Activated CD4-positive, alpha-beta T cell treated with anti-CD3 and anti-CD28 coated beads for 36 hours (primary cell): ENCODE measurements at regions of chr6 and their contacts with region 1.

Region 1: GRCh38 chr6:45486736-45487135 is 109.0 kb upstream of the SUPT3H start:
- DNase-seq: peak; percentile 50
- ATAC-seq: peak; percentile 94
- H3K4me3 Mint-ChIP-seq: no peak overlapping the region
- H3K27ac Mint-ChIP-seq: peak overlapping the region; percentile 58
- H3K4me1 Mint-ChIP-seq: peaks cover 53% of the 10 kb centered on the region
- H3K27me3 Mint-ChIP-seq: peaks cover 2% of the 10 kb centered on the region

Region 2: GRCh38 chr6:45436544-45437438 is 49.9 kb before region 1 on chr6:
- CTCF ChIA-PET with region 1: no interaction called
- POLR2A ChIA-PET with region 1: no interaction called
- intact Hi-C with region 1: loop called (anchors 1 to 2 kb)
- DNase-seq: peak; percentile 69
- ATAC-seq: peak; percentile 92
- H3K4me3 Mint-ChIP-seq: peak overlapping the region; percentile 59
- H3K27ac Mint-ChIP-seq: peak overlapping the region; percentile 92
- H3K4me1 Mint-ChIP-seq: peaks cover 74% of the 10 kb centered on the region
- H3K27me3 Mint-ChIP-seq: peaks cover 2% of the 10 kb centered on the region

Region 3: DNA sequence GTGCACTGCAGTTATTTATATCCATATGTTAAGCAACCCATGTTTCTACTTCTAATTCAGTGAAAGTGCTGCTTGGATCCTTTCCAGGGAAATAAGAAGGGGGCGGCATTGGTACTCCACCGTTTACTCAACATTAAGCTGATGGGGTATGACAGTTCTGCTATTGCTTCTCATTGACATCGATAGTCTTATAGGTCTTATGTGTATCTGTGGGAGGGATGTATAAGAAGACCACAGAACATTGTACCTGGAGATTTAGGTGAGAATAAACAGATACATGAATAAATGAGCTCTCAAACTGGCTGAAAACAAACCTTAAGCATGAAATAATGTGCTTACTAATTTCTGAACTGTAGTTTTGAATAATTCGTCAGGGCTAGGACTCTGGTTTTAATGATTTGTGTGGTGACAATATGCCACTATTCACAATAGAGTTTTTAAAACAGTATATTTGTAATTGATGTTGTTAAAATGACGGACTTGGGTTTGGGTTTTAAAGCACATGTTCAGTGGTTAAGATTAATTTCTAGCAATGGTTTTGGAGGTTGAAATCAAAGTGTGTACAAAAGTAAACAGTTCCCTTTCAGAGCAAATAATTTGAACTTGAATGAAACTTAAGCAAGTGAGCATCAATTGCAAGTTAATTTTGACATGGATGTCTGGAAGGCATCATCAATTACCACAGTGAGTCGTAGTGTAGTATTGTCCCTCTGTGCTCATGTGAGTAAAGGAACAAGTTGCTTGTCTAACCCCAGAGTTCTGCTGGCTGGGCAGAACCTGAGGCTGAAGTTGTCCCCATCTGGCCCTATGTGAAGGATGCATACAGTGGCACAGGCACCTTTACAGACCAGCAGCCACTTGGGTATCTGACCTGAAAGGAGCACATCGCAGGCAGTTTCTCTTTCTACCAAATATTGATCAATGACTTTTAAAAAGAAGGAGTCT is 24.3 kb before region 1 on chr6:
- CTCF ChIA-PET with region 1: no interaction called
- POLR2A ChIA-PET with region 1: no interaction called
- intact Hi-C with region 1: no loop called
- DNase-seq: no peak
- ATAC-seq: peak; percentile 54
- H3K4me3 Mint-ChIP-seq: no peak overlapping the region
- H3K27ac Mint-ChIP-seq: peak overlapping the region; percentile 38
- H3K4me1 Mint-ChIP-seq: peaks cover 20% of the 10 kb centered on the region
- H3K27me3 Mint-ChIP-seq: no peaks in the 10 kb centered on the region

Region 4: DNA sequence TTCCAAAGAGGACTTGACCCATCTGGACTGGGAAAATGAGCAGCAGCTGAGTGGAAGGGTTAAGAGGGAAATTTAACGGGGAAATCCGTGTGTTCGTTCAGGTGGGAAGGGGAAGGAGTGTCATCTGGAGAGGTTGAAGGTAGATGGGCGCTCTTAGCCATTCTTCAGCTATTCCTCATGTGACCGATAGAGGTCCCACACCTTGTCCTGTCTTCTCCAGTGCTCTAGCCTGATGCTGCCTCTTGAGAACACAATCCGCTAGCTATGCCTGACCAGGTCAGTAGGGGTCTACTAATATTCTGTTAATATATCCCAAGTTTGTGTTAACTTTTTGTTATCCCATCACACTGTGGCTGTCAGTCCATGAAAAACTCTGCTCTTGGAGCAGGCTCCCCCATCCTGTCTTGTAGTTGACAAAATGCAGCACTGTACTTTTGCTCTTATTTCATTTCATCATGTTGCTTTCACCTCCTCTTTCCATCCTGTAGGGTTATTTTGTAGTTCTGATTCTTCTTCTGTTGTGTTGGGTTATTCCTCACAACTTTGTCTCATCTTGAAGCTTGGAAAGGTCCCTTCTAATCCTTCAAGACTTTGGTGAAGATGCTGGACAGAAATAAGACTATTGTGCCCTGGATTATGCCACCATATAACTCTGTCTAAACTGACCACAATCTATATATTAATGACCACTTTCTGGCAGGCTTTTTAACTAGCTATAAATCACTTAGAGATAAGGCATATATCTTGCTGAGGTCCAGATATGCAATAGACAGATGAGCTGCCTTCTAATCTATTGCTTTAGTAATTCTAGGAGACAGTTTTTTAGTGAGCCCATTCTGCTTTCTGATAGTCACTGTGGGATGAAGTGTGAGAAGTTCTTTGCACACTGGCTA is 14.4 kb after region 1 on chr6:
- CTCF ChIA-PET with region 1: no interaction called
- POLR2A ChIA-PET with region 1: no interaction called
- intact Hi-C with region 1: no loop called
- DNase-seq: no peak
- ATAC-seq: no peak
- H3K4me3 Mint-ChIP-seq: no peak overlapping the region
- H3K27ac Mint-ChIP-seq: no peak overlapping the region
- H3K4me1 Mint-ChIP-seq: peaks cover 26% of the 10 kb centered on the region
- H3K27me3 Mint-ChIP-seq: no peaks in the 10 kb centered on the region

Region 5: GRCh38 chr6:45514454-45515230 is 27.9 kb after region 1 on chr6:
- CTCF ChIA-PET with region 1: no interaction called
- POLR2A ChIA-PET with region 1: no interaction called
- intact Hi-C with region 1: no loop called
- DNase-seq: no peak
- ATAC-seq: no peak
- H3K4me3 Mint-ChIP-seq: no peak overlapping the region
- H3K27ac Mint-ChIP-seq: no peak overlapping the region
- H3K4me1 Mint-ChIP-seq: no peaks in the 10 kb centered on the region
- H3K27me3 Mint-ChIP-seq: no peaks in the 10 kb centered on the region

Region 6: GRCh38 chr6:45590225-45590624 is 103.5 kb after region 1 on chr6:
- CTCF ChIA-PET with region 1: no interaction called
- POLR2A ChIA-PET with region 1: no interaction called
- intact Hi-C with region 1: loop called in 1 of 2 experiments (anchors 5 kb)
- DNase-seq: no peak
- ATAC-seq: peak; percentile 40
- H3K4me3 Mint-ChIP-seq: no peak overlapping the region
- H3K27ac Mint-ChIP-seq: peak overlapping the region; percentile 80
- H3K4me1 Mint-ChIP-seq: peaks cover 81% of the 10 kb centered on the region
- H3K27me3 Mint-ChIP-seq: no peaks in the 10 kb centered on the region

Region 7: DNA sequence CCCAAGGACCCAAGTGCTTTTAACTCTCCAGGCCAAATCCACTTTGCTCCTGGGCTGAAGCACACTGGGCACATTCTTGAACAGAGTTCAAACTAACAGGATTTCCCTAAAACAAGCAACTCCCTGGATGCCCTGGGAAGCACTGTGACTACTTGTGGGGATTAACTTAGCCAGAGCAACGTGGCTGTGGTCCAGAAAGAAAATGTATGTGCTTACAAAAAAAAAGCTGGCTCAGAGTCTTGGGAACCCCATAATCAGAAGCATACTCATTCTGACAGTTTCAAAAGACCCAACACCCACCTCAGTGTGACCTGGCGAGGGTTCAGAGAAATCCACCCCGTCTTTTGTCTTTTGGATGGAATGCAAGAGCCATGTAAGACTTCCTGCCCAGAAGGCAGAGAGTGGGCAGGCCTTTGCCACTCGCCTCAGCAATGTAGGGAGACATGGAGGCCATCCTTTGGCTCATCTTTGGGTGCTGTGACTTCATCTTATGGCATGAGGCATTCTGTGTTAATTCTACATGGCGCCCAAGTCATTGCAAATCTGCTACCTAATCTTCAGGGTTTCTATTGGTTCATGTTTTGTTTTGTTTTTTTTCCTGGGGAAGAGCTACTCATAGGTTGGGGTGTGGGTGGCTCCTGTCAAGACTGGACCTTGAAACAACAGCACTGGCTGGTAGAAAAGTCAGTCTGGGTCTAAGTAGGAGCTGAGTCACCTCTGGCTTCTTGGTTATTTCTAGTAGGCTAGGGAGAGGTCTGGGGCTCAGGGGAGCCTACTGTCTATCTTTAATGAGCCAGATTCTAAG is 139.6 kb after region 1 on chr6:
- CTCF ChIA-PET with region 1: no interaction called
- POLR2A ChIA-PET with region 1: no interaction called
- intact Hi-C with region 1: loop called in 1 of 2 experiments (anchors 5 kb)
- DNase-seq: peak; percentile 42
- ATAC-seq: peak; percentile 57
- H3K4me3 Mint-ChIP-seq: no peak overlapping the region
- H3K27ac Mint-ChIP-seq: peak overlapping the region; percentile 76
- H3K4me1 Mint-ChIP-seq: peaks cover 45% of the 10 kb centered on the region
- H3K27me3 Mint-ChIP-seq: no peaks in the 10 kb centered on the region

Region 8: DNA sequence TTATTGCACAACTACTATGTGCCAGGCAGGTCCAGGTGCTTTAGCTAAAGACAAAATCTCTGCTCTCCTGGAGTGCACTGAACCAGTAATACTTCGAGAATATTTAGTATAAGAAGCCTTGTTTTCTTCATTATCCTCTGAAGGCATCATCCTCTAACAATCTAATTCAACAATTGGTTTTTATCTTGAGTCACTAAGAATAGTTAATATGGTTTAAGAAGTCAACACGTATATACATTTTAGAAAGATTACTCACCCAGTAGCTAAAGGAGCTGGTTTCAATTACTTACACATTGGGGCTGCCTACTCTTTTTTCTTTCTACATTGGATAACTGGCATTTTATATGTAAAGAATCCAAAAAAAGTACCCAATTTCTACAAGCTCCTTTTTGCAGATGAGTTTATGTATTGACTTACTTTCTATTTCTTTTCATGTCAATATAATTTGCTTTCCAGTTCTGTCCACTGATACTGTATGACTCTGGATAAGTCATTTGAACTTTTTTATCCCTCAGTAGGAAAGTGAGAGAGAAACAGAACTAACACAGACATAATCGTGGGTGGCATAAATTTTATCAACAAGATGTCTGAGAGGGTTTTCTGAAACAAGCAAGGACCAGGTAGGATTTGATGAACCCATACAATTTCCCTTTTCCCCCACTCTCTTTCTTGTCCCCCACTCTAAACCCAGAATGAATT is 216.5 kb after region 1 on chr6:
- CTCF ChIA-PET with region 1: no interaction called
- POLR2A ChIA-PET with region 1: no interaction called
- intact Hi-C with region 1: loop called in 1 of 2 experiments (anchors 2 kb)
- DNase-seq: no peak
- ATAC-seq: peak; percentile 63
- H3K4me3 Mint-ChIP-seq: no peak overlapping the region
- H3K27ac Mint-ChIP-seq: peak overlapping the region; percentile 76
- H3K4me1 Mint-ChIP-seq: peaks cover 21% of the 10 kb centered on the region
- H3K27me3 Mint-ChIP-seq: no peaks in the 10 kb centered on the region

Region 9: DNA sequence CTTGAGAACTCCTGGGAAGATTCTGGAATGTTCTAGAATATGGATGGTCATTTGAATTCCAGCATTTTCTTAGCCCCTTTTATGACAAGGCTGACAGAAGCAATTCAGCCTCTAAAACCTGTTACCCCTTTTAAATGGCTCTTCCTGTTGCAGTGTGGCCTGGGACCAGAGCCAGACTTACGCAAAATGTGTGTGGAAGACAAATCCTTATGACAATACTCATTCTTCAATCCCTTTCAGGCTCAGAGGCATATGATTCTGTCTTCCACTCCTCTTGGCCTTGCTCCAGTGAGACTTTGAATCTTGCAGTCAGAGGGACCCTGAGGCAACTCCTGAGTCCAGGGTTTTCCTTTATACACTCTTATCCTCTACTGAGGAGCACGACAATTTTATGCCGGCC is 241.9 kb after region 1 on chr6:
- CTCF ChIA-PET with region 1: no interaction called
- POLR2A ChIA-PET with region 1: no interaction called
- intact Hi-C with region 1: no loop called
- DNase-seq: no peak
- ATAC-seq: no peak
- H3K4me3 Mint-ChIP-seq: no peak overlapping the region
- H3K27ac Mint-ChIP-seq: no peak overlapping the region
- H3K4me1 Mint-ChIP-seq: peaks cover 8% of the 10 kb centered on the region
- H3K27me3 Mint-ChIP-seq: peaks cover 4% of the 10 kb centered on the region

Region 10: GRCh38 chr6:45801471-45802289 is 314.9 kb after region 1 on chr6:
- CTCF ChIA-PET with region 1: no interaction called
- POLR2A ChIA-PET with region 1: no interaction called
- intact Hi-C with region 1: loop called in 1 of 2 experiments (anchors 5 kb)
- DNase-seq: peak; percentile 80
- ATAC-seq: peak; percentile 82
- H3K4me3 Mint-ChIP-seq: no peak overlapping the region
- H3K27ac Mint-ChIP-seq: peak overlapping the region; percentile 72
- H3K4me1 Mint-ChIP-seq: peaks cover 22% of the 10 kb centered on the region
- H3K27me3 Mint-ChIP-seq: peaks cover 2% of the 10 kb centered on the region